A673 (cell line): ENCODE measurements at regions of chr3 and their contacts with region 1.

Region 1: DNA sequence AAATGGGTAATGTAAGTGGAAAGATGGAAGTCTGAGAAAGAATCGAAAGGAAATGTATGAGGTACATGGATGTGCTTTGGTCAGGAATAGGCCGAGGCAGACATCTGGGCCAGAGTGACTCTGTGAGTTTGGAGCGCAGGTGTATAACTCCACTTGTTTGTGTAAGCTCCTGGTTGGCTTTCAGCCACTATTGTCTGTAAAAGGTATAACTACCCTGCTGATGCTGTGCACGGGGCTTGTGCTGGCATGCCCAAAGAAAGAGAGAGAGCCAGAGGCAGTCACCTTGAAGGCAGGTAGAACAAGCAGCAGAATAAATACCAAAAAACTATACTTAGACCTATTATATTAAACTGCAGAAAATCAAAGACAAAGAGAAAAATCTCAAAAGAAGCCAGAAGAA is 32.7 kb upstream of the CD96 start:
- DNase-seq: no peak
- H3K4me3 ChIP-seq: no peak overlapping the region
- H3K27ac ChIP-seq: no peak overlapping the region
- H3K4me1 ChIP-seq: no peaks in the 10 kb centered on the region
- H3K27me3 ChIP-seq: no peaks in the 10 kb centered on the region
- CTCF ChIP-seq: no peak

Region 2: DNA sequence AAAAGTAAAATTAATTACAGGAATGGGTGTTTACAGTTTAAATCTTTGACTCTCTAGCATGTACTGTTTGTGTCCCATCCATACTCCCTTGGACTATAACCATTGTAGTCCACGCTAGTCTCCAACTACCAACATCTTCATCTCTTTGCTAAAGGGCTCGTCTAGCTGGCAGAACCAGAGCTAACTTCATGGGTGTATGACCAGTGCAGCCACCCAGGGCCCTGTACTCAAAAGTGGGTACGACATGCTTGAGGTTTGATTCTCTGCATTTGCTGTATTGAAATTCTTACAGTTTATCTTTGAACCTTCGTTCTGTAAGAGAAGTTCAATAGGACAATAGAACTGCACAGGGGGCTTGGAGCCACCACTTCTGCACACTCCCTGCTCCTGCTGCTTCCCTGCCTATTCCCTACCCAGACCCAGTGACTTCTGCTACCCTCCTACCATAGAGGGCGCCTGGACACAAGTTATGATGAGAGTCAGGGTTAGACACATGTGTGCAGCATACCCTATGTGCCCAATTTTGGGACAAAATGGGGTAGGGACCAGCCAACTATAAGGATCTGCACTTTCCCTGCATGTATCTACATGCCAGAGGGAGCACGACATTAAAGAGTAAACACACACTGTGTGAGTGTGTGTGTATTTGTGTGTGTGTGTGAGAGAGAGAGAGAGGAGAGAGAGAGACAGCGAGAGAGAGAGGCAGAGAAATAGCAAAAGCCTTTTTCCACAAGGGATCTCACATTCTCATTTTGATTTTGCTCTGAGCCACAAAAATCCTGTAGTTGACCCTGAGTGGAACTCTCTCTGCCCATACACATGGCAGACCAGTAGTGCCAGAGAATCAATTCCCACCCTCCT is 496.7 kb before region 1 on chr3:
- CTCF ChIA-PET with region 1: no interaction called
- POLR2A ChIA-PET with region 1: no interaction called
- intact Hi-C with region 1: no loop called
- DNase-seq: peak; percentile 6
- H3K4me3 ChIP-seq: no peak overlapping the region
- H3K27ac ChIP-seq: no peak overlapping the region
- H3K4me1 ChIP-seq: no peaks in the 10 kb centered on the region
- H3K27me3 ChIP-seq: no peaks in the 10 kb centered on the region
- CTCF ChIP-seq: 0 out of 2 replicates have a peak, but pooled peaks have one; percentile 20

Region 3: GRCh38 chr3:111277226-111277625 is 232.1 kb before region 1 on chr3:
- CTCF ChIA-PET with region 1: interaction called, 10 read pairs
- POLR2A ChIA-PET with region 1: no interaction called
- intact Hi-C with region 1: no loop called
- DNase-seq: peak; percentile 4
- H3K4me3 ChIP-seq: no peak overlapping the region
- H3K27ac ChIP-seq: no peak overlapping the region
- H3K4me1 ChIP-seq: no peaks in the 10 kb centered on the region
- H3K27me3 ChIP-seq: no peaks in the 10 kb centered on the region
- CTCF ChIP-seq: no peak

Region 4: DNA sequence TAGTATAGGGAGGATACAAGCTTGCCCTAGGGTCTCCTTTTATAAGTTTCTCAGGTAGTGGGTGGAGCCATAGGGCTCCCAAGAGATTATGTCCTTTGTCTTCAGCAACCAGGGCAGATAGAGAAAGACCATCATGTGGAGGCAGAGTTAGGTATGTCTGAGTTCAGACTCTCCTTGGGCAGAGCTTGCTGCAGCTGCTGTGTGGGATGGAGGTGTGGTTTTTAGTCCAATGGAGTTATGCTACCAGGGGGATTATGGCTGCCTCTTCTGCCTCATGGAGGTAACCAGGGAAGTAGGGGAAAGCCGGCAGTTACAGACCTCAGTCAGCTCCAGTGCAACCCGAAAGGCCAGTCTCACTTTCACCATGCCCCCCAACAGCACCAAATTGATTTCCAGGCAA is 217.2 kb before region 1 on chr3:
- CTCF ChIA-PET with region 1: no interaction called
- POLR2A ChIA-PET with region 1: no interaction called
- intact Hi-C with region 1: no loop called
- DNase-seq: no peak
- H3K4me3 ChIP-seq: no peak overlapping the region
- H3K27ac ChIP-seq: no peak overlapping the region
- H3K4me1 ChIP-seq: no peaks in the 10 kb centered on the region
- H3K27me3 ChIP-seq: no peaks in the 10 kb centered on the region
- CTCF ChIP-seq: no peak

Region 5: GRCh38 chr3:111315925-111316587 is 193.3 kb before region 1 on chr3:
- CTCF ChIA-PET with region 1: no interaction called
- POLR2A ChIA-PET with region 1: no interaction called
- intact Hi-C with region 1: no loop called
- DNase-seq: peak; percentile 30
- H3K4me3 ChIP-seq: no peak overlapping the region
- H3K27ac ChIP-seq: no peak overlapping the region
- H3K4me1 ChIP-seq: peaks cover 4% of the 10 kb centered on the region
- H3K27me3 ChIP-seq: no peaks in the 10 kb centered on the region
- CTCF ChIP-seq: no peak